Naive thymus-derived CD4-positive, alpha-beta T cell (primary cell): ENCODE measurements at regions of chr3 and their contacts with region 1.

Region 1: GRCh38 chr3:17233398-17233800 is 348.6 kb downstream of the PLCL2 start:
- DNase-seq: peak in 8 of 9 donors; percentile 22 to 73 (median 58)
- ATAC-seq: peak; percentile 97
- H3K4me3 ChIP-seq: no peak overlapping the region
- H3K4me3 Mint-ChIP-seq: peak overlapping the region in 7 of 10 donors; percentile 2 to 56 (median 50)
- H3K27ac ChIP-seq: no peak overlapping the region
- H3K27ac Mint-ChIP-seq: peak overlapping the region in 5 of 9 donors; percentile 4 to 73 (median 31)
- H3K4me1 ChIP-seq: peaks cover 0 to 18% of the 10 kb centered on the region in 2 donors
- H3K4me1 Mint-ChIP-seq: peaks cover 5 to 30% (median 27%) of the 10 kb centered on the region in 7 donors
- H3K27me3 ChIP-seq: no peaks in the 10 kb centered on the region
- H3K27me3 Mint-ChIP-seq: no peaks in the 10 kb centered on the region

Region 2: GRCh38 chr3:16048435-16049318 is 1184.7 kb before region 1 on chr3:
- CTCF ChIA-PET with region 1: no interaction called
- POLR2A ChIA-PET with region 1: no interaction called
- intact Hi-C with region 1: loop called in 1 of 2 experiments (anchors 5 kb)
- DNase-seq: peak in 7 of 9 donors; percentile 11 to 53 (median 43)
- ATAC-seq: peak; percentile 92
- H3K4me3 ChIP-seq: no peak overlapping the region
- H3K4me3 Mint-ChIP-seq: peak overlapping the region in 5 of 10 donors; percentile 4 to 72 (median 48)
- H3K27ac ChIP-seq: no peak overlapping the region
- H3K27ac Mint-ChIP-seq: no peak overlapping the region
- H3K4me1 ChIP-seq: no peaks in the 10 kb centered on the region
- H3K4me1 Mint-ChIP-seq: peaks cover 0 to 5% (median 4%) of the 10 kb centered on the region in 7 donors
- H3K27me3 ChIP-seq: no peaks in the 10 kb centered on the region
- H3K27me3 Mint-ChIP-seq: peaks cover 0 to 5% (median 0%) of the 10 kb centered on the region in 5 donors

Region 3: GRCh38 chr3:16808393-16809107 is 424.8 kb before region 1 on chr3:
- CTCF ChIA-PET with region 1: interaction called, 4 read pairs
- POLR2A ChIA-PET with region 1: interaction called, 5 read pairs
- intact Hi-C with region 1: loop called in 1 of 2 experiments (anchors 1 kb)
- DNase-seq: peak in 2 of 9 donors; percentile 8 to 16
- ATAC-seq: no peak
- H3K4me3 ChIP-seq: no peak overlapping the region
- H3K4me3 Mint-ChIP-seq: no peak overlapping the region
- H3K27ac ChIP-seq: no peak overlapping the region
- H3K27ac Mint-ChIP-seq: no peak overlapping the region
- H3K4me1 ChIP-seq: peaks cover 13 to 14% of the 10 kb centered on the region in 2 donors
- H3K4me1 Mint-ChIP-seq: peaks cover 8 to 36% (median 25%) of the 10 kb centered on the region in 7 donors
- H3K27me3 ChIP-seq: no peaks in the 10 kb centered on the region
- H3K27me3 Mint-ChIP-seq: peaks cover 0 to 43% (median 0%) of the 10 kb centered on the region in 5 donors

Region 4: DNA sequence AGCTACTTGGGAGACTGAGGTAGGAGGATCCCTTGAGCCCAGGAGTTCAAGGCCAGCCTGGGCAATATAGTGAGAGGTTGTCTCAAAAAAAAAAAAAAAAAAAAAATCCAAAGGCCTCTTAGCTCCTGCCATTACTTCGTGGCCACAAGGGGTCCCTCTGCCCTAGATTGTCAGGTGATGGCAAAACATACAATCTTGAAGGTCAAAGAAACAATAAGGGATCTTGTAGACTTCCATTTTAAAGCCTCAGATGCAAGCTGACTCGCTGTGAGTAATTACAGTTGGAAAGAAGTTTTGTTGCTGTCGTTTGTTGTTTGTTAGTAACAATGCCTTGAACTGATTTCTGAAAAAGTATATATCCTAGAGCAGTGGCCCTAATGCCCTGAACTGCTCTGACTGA is 404.6 kb before region 1 on chr3:
- CTCF ChIA-PET with region 1: interaction called, 10 read pairs
- POLR2A ChIA-PET with region 1: interaction called, 9 read pairs
- intact Hi-C with region 1: loop called (anchors 1 kb)
- DNase-seq: peak in 6 of 9 donors; percentile 29 to 59 (median 42)
- ATAC-seq: peak; percentile 80
- H3K4me3 ChIP-seq: no peak overlapping the region
- H3K4me3 Mint-ChIP-seq: no peak overlapping the region
- H3K27ac ChIP-seq: no peak overlapping the region
- H3K27ac Mint-ChIP-seq: peak overlapping the region in 3 of 9 donors; percentile 23 to 53 (median 42)
- H3K4me1 ChIP-seq: peaks cover 11 to 15% of the 10 kb centered on the region in 2 donors
- H3K4me1 Mint-ChIP-seq: peaks cover 16 to 37% (median 19%) of the 10 kb centered on the region in 7 donors
- H3K27me3 ChIP-seq: no peaks in the 10 kb centered on the region
- H3K27me3 Mint-ChIP-seq: peaks cover 0 to 20% (median 0%) of the 10 kb centered on the region in 5 donors

Region 5: GRCh38 chr3:17032407-17033034 is 200.9 kb before region 1 on chr3:
- CTCF ChIA-PET with region 1: interaction called, 3 read pairs
- POLR2A ChIA-PET with region 1: no interaction called
- intact Hi-C with region 1: loop called (anchors 5 kb)
- DNase-seq: no peak
- ATAC-seq: no peak
- H3K4me3 ChIP-seq: no peak overlapping the region
- H3K4me3 Mint-ChIP-seq: peak overlapping the region in 1 of 10 donors; percentile 11
- H3K27ac ChIP-seq: no peak overlapping the region
- H3K27ac Mint-ChIP-seq: peak overlapping the region in 7 of 9 donors; percentile 4 to 60 (median 17)
- H3K4me1 ChIP-seq: peaks cover 0 to 24% of the 10 kb centered on the region in 2 donors
- H3K4me1 Mint-ChIP-seq: peaks cover 48 to 90% (median 80%) of the 10 kb centered on the region in 7 donors
- H3K27me3 ChIP-seq: no peaks in the 10 kb centered on the region
- H3K27me3 Mint-ChIP-seq: no peaks in the 10 kb centered on the region

Region 6: DNA sequence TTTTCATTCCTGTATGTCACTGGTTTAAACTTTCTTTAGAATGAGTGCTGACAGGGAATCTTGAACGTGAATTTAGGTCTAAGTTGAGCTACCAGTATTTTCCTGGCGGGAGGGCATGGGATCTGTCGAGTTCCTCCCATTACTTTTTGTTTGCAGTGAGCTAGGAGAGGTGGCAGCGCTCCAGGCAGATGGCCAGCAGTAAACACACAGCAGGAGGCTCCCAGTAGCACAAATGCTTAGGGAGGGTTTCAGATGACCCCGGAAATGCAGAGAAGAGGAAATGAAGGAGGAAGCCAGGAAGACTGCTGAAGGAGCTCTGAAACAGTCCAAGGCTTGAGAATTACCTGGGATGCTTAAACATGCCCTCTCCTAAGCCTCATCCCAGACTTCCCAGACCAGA is 162.8 kb before region 1 on chr3:
- CTCF ChIA-PET with region 1: no interaction called
- POLR2A ChIA-PET with region 1: no interaction called
- intact Hi-C with region 1: loop called in 1 of 2 experiments (anchors 5 kb)
- DNase-seq: no peak
- ATAC-seq: no peak
- H3K4me3 ChIP-seq: no peak overlapping the region
- H3K4me3 Mint-ChIP-seq: no peak overlapping the region
- H3K27ac ChIP-seq: no peak overlapping the region
- H3K27ac Mint-ChIP-seq: peak overlapping the region in 3 of 9 donors; percentile 20 to 83 (median 32)
- H3K4me1 ChIP-seq: peaks cover 20 to 21% of the 10 kb centered on the region in 2 donors
- H3K4me1 Mint-ChIP-seq: peaks cover 39 to 70% (median 60%) of the 10 kb centered on the region in 7 donors
- H3K27me3 ChIP-seq: no peaks in the 10 kb centered on the region
- H3K27me3 Mint-ChIP-seq: no peaks in the 10 kb centered on the region

Region 7: DNA sequence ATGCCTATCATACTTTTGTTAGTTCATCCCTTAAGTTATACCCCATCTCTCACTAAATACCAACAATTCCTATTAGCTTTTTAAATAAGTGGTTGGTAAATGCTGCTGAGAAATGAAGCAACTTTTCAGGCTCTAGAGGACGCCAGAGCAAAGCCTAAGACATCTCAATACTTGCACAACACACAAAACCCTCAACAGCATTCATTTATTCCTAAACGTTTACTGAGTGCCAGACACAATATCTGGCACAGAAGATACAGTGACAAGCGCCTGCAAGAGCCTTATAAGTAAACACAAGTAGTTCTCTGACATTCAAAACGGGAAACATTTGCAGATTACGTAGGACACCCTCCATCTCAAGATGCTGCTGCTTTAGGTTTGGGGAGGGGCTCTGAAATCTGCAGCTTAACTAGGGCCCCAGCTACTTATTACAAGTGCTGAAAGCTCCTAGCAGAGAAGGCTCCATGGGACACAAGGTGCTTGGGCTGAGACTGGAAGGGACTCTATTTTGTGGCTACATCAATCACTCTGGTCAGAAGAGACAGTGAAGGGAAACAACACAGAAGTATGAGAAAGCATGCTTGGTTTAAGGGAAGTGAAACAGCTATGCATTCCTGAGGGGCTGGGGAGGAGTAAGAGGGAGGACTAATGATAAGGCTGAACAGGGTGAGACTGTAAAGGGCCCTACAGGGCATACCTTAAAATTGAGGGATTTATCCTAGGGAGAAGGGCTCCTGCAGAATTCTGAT is 37.4 kb before region 1 on chr3:
- CTCF ChIA-PET with region 1: no interaction called
- POLR2A ChIA-PET with region 1: no interaction called
- intact Hi-C with region 1: no loop called
- DNase-seq: no peak
- ATAC-seq: peak; percentile 71
- H3K4me3 ChIP-seq: no peak overlapping the region
- H3K4me3 Mint-ChIP-seq: no peak overlapping the region
- H3K27ac ChIP-seq: no peak overlapping the region
- H3K27ac Mint-ChIP-seq: peak overlapping the region in 1 of 9 donors; percentile 15
- H3K4me1 ChIP-seq: peaks cover 0 to 4% of the 10 kb centered on the region in 2 donors
- H3K4me1 Mint-ChIP-seq: peaks cover 0 to 12% (median 0%) of the 10 kb centered on the region in 7 donors
- H3K27me3 ChIP-seq: no peaks in the 10 kb centered on the region
- H3K27me3 Mint-ChIP-seq: no peaks in the 10 kb centered on the region

Region 8: GRCh38 chr3:17266846-17267245 is 33.4 kb after region 1 on chr3:
- CTCF ChIA-PET with region 1: no interaction called
- POLR2A ChIA-PET with region 1: no interaction called
- intact Hi-C with region 1: no loop called
- DNase-seq: no peak
- ATAC-seq: no peak
- H3K4me3 ChIP-seq: no peak overlapping the region
- H3K4me3 Mint-ChIP-seq: no peak overlapping the region
- H3K27ac ChIP-seq: no peak overlapping the region
- H3K27ac Mint-ChIP-seq: no peak overlapping the region
- H3K4me1 ChIP-seq: no peaks in the 10 kb centered on the region
- H3K4me1 Mint-ChIP-seq: no peaks in the 10 kb centered on the region
- H3K27me3 ChIP-seq: no peaks in the 10 kb centered on the region
- H3K27me3 Mint-ChIP-seq: no peaks in the 10 kb centered on the region

Region 9: DNA sequence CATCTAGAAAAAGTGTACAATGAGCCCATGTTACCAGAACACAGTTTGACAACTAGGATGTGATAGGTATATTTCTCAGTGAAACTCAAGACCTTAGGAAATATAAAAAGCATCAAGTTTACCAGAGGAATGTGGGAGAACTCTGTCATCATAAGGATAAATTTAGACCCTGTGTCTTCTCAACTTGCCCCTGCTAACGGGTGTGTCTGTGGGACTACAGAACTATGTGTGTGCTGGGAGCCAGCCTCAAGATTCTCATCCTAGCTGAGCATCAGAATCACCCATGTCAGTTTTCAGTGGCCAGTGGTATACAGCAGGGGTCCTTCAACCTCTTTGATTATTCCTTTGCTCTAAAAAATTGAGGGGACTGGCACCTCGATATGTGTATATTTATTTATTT is 44.6 kb after region 1 on chr3:
- CTCF ChIA-PET with region 1: no interaction called
- POLR2A ChIA-PET with region 1: no interaction called
- intact Hi-C with region 1: no loop called
- DNase-seq: no peak
- ATAC-seq: no peak
- H3K4me3 ChIP-seq: no peak overlapping the region
- H3K4me3 Mint-ChIP-seq: no peak overlapping the region
- H3K27ac ChIP-seq: no peak overlapping the region
- H3K27ac Mint-ChIP-seq: no peak overlapping the region
- H3K4me1 ChIP-seq: no peaks in the 10 kb centered on the region
- H3K4me1 Mint-ChIP-seq: no peaks in the 10 kb centered on the region
- H3K27me3 ChIP-seq: no peaks in the 10 kb centered on the region
- H3K27me3 Mint-ChIP-seq: no peaks in the 10 kb centered on the region

Region 10: GRCh38 chr3:17412950-17413530 is 179.6 kb after region 1 on chr3:
- CTCF ChIA-PET with region 1: interaction called, 5 read pairs
- POLR2A ChIA-PET with region 1: no interaction called
- intact Hi-C with region 1: loop called in 1 of 2 experiments (anchors 1 kb)
- DNase-seq: peak in 6 of 9 donors; percentile 21 to 53 (median 41)
- ATAC-seq: peak; percentile 69
- H3K4me3 ChIP-seq: no peak overlapping the region
- H3K4me3 Mint-ChIP-seq: no peak overlapping the region
- H3K27ac ChIP-seq: no peak overlapping the region
- H3K27ac Mint-ChIP-seq: peak overlapping the region in 1 of 9 donors; percentile 51
- H3K4me1 ChIP-seq: no peaks in the 10 kb centered on the region
- H3K4me1 Mint-ChIP-seq: no peaks in the 10 kb centered on the region
- H3K27me3 ChIP-seq: no peaks in the 10 kb centered on the region
- H3K27me3 Mint-ChIP-seq: no peaks in the 10 kb centered on the region